ENCODE measurements at regions of chr3 and their contacts with region 1.

Region 1: GRCh38 chr3:69161587-69162307 is 39.4 kb upstream of the LMOD3 start:
- DNase-seq: no peak
- ATAC-seq: peak; percentile 83
- H3K4me3 ChIP-seq: no peak overlapping the region
- H3K27ac ChIP-seq: no peak overlapping the region
- H3K4me1 ChIP-seq: no peaks in the 10 kb centered on the region
- H3K27me3 ChIP-seq: no peaks in the 10 kb centered on the region

Region 2: DNA sequence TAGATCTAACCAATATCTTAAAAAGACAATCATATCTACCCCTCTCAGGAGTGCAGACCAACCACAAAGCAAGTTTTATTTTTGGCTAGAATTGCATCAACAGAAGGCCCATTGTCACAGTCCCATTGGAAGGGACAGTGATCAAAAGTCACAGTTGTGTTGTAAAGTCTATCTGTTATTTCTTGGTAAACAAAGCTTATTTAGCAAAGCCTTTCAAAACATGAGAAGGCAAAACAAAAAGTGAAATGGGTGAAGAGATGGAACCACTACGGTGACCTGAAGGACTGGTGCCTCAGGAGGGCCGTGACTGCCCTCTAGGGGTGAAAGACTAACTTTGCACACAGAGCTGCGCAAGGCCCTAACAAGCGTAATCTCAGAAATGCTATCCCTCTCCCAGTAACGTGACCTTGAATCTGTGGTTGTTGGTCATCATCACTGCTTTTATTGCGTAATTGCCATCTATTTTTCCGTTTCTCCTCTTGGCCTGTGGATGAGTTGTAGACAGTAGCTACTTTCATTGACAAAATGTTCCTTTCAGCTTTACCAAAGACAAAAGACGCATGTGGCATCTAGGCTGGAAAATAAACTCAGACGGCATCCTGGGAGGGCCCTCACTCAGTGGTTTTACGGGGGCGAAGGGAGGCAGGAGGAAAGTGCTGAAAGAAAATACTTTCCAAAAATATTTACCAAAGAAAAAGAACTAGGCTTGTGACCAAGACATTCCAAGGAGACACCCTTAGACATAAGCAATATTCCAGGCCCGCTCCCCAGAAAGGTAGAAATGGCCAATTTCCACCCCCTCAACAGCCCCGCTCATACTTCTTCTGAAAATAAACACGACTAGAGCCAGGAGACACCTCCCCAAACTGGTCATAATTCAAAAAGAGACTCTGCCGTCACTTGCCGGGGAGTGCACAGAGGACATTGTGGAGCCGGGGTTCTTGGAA is 144.8 kb after region 1 on chr3:
- intact Hi-C with region 1: loop called (anchors 5 kb)
- DNase-seq: peak; percentile 77 to 79
- ATAC-seq: peak; percentile 98
- H3K4me3 ChIP-seq: no peak overlapping the region
- H3K27ac ChIP-seq: peak overlapping the region in 1 of 2 donors; percentile 47
- H3K4me1 ChIP-seq: peaks cover 3 to 4% of the 10 kb centered on the region in 2 donors
- H3K27me3 ChIP-seq: no peaks in the 10 kb centered on the region

Region 3: DNA sequence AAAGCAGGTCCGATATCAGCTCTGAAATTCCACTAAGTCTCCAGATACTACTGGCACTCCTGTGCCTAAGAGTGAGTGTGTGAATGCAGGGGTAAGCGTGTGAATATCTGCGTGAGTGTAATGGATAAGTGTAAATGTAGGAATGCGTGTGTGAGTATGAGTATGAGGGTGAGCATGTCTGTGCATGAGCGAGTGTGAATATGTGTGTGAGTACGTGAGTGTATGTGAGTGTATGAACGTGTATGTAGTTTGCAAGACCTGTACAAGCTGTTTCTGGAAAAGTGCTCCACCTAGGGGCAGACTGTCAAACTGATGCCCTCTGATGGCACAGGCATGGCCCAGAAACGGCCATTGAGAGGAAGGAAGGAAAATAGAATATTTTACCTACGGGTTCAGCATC is 248.5 kb after region 1 on chr3:
- intact Hi-C with region 1: loop called in 1 of 2 experiments (anchors 5 kb)
- DNase-seq: peak; percentile 79 to 80
- ATAC-seq: peak; percentile 83
- H3K4me3 ChIP-seq: no peak overlapping the region
- H3K27ac ChIP-seq: no peak overlapping the region
- H3K4me1 ChIP-seq: no peaks in the 10 kb centered on the region
- H3K27me3 ChIP-seq: no peaks in the 10 kb centered on the region

Region 4: GRCh38 chr3:69426967-69427304 is 265.2 kb after region 1 on chr3:
- intact Hi-C with region 1: loop called in 1 of 2 experiments (anchors 2 kb)
- DNase-seq: no peak
- ATAC-seq: no peak
- H3K4me3 ChIP-seq: no peak overlapping the region
- H3K27ac ChIP-seq: no peak overlapping the region
- H3K4me1 ChIP-seq: no peaks in the 10 kb centered on the region
- H3K27me3 ChIP-seq: no peaks in the 10 kb centered on the region

Region 5: GRCh38 chr3:69671082-69671952 is 509.6 kb after region 1 on chr3:
- intact Hi-C with region 1: loop called (anchors 5 to 10 kb)
- DNase-seq: no peak
- ATAC-seq: no peak
- H3K4me3 ChIP-seq: no peak overlapping the region
- H3K27ac ChIP-seq: no peak overlapping the region
- H3K4me1 ChIP-seq: no peaks in the 10 kb centered on the region
- H3K27me3 ChIP-seq: peaks cover 0 to 2% of the 10 kb centered on the region in 2 donors

Measured in aorta (tissue), 5 donors.